GM12878 (cell line): ENCODE measurements at regions of chr13 and their contacts with region 1.

Region 1: DNA sequence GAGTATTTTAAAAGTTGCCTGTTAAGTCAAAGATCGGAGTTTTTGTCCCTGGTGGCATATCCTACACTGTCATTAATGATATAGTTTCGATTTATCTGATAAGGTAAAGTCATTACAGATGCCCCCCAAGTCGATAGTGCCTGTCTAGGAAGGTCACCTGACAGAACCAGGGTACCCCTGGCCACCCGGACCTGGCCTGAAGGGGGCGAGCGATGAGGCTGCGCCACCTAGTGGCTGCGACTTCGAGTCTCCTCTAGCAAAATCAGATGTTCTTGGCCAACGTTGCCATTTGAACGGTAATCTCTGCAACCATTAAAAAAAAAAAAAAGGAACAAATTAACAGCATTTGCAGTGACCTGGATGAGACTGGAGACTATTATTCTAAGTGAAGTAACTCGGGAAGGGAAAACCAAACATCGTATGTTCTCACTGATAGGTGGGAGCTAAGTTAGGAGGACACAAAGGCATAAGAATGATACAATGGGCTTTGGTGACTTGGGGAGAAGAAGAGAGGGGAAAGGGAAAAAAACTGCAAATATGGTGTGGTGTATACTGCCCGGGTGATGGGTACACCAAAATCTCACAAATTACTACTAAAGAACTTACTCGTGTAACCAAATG is 565.1 kb downstream of the LIG4 start:
- DNase-seq: no peak
- ATAC-seq: peak; percentile 92
- H3K4me3 ChIP-seq: no peak overlapping the region
- H3K27ac ChIP-seq: no peak overlapping the region
- H3K4me1 ChIP-seq: no peaks in the 10 kb centered on the region
- H3K27me3 ChIP-seq: no peaks in the 10 kb centered on the region
- CTCF ChIP-seq: peak; percentile 77 to 91 (median 81)
- EP300 ChIP-seq: no peak
- POLR2A ChIP-seq: no peak
- RAD21 ChIP-seq: peak; percentile 62

Region 2: DNA sequence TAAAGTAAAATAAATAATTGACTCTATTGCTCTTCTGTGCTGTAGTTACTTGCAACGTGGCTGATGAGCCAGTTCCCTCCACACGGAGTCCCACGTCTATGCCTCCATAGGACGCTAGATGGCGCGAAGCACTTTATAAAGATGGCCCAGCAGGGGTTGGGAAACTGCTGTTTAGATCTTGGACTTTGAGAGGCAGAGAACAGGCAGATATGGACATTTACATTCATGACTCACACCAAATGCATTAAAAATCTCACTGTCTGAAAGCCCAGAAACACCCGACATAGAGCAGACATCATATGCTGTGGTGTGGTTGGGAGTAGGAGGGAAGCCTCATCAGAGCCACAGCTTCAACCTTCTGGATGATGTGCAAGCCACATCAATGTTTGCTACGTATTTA is 439.1 kb before region 1 on chr13:
- CTCF ChIA-PET with region 1: interaction called, 21 read pairs
- POLR2A ChIA-PET with region 1: no interaction called
- RAD21 ChIA-PET with region 1: interaction called, 3 read pairs
- SMC1A ChIA-PET with region 1: interaction called, 16 read pairs
- in situ Hi-C with region 1: loop called (anchors 10 kb)
- intact Hi-C with region 1: loop called (anchors 1 kb)
- DNase-seq: no peak
- ATAC-seq: peak; percentile 99
- H3K4me3 ChIP-seq: no peak overlapping the region
- H3K27ac ChIP-seq: no peak overlapping the region
- H3K4me1 ChIP-seq: no peaks in the 10 kb centered on the region
- H3K27me3 ChIP-seq: no peaks in the 10 kb centered on the region
- CTCF ChIP-seq: peak; percentile 82 to 92 (median 88)
- EP300 ChIP-seq: no peak
- POLR2A ChIP-seq: no peak
- RAD21 ChIP-seq: peak; percentile 88

Region 3: GRCh38 chr13:107373551-107373950 is 276.6 kb before region 1 on chr13:
- CTCF ChIA-PET with region 1: interaction called, 8 read pairs
- POLR2A ChIA-PET with region 1: no interaction called
- RAD21 ChIA-PET with region 1: interaction called, 5 read pairs
- SMC1A ChIA-PET with region 1: no interaction called
- in situ Hi-C with region 1: no loop called
- intact Hi-C with region 1: loop called (anchors 2 kb)
- DNase-seq: no peak
- ATAC-seq: no peak
- H3K4me3 ChIP-seq: no peak overlapping the region
- H3K27ac ChIP-seq: no peak overlapping the region
- H3K4me1 ChIP-seq: no peaks in the 10 kb centered on the region
- H3K27me3 ChIP-seq: no peaks in the 10 kb centered on the region
- CTCF ChIP-seq: peak; percentile 14 to 25 (median 25); a peak in 2 of 6 replicates
- EP300 ChIP-seq: no peak
- POLR2A ChIP-seq: no peak
- RAD21 ChIP-seq: no peak

Region 4: GRCh38 chr13:107625648-107626047 is 24.5 kb before region 1 on chr13:
- CTCF ChIA-PET with region 1: no interaction called
- POLR2A ChIA-PET with region 1: no interaction called
- RAD21 ChIA-PET with region 1: no interaction called
- SMC1A ChIA-PET with region 1: no interaction called
- in situ Hi-C with region 1: no loop called
- intact Hi-C with region 1: no loop called
- DNase-seq: no peak
- ATAC-seq: no peak
- H3K4me3 ChIP-seq: no peak overlapping the region
- H3K27ac ChIP-seq: no peak overlapping the region
- H3K4me1 ChIP-seq: no peaks in the 10 kb centered on the region
- H3K27me3 ChIP-seq: no peaks in the 10 kb centered on the region
- CTCF ChIP-seq: no peak
- EP300 ChIP-seq: no peak
- POLR2A ChIP-seq: no peak
- RAD21 ChIP-seq: no peak

Region 5: GRCh38 chr13:107764046-107764445 is 113.9 kb after region 1 on chr13:
- CTCF ChIA-PET with region 1: no interaction called
- POLR2A ChIA-PET with region 1: no interaction called
- RAD21 ChIA-PET with region 1: no interaction called
- SMC1A ChIA-PET with region 1: no interaction called
- in situ Hi-C with region 1: no loop called
- intact Hi-C with region 1: no loop called
- DNase-seq: no peak
- ATAC-seq: no peak
- H3K4me3 ChIP-seq: no peak overlapping the region
- H3K27ac ChIP-seq: no peak overlapping the region
- H3K4me1 ChIP-seq: no peaks in the 10 kb centered on the region
- H3K27me3 ChIP-seq: no peaks in the 10 kb centered on the region
- CTCF ChIP-seq: no peak
- EP300 ChIP-seq: no peak
- POLR2A ChIP-seq: no peak
- RAD21 ChIP-seq: no peak